Spleen (tissue), 13 donors: ENCODE measurements at regions of chr20 and their contacts with region 1.

Region 1: DNA sequence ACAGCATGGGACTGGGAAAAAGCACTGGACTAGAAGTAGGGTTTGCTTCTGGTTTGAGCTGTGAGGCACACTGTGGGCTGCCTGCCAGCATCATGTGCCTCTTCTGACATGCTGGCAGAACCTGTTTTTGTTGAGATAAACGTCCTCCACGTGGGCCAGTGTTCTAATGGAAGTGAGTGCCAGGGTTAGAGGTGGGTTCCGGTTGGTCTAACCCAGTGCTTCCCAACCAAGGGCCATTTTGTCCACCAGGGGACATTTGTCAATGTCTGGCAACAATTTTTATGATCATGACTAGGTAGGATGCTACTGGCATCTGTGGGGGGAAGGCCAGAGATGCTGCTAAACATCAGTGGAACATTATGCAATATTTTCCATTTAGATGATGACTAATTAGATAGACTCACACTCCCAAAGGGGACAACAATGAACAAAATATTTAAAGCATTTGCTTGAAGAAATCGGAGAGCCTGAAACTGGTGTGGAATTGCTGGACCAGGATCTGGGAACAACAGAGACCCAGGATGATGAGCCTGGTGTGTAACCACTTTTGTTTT is 7.8 kb upstream of the APMAP start:
- DNase-seq: peak; percentile 24
- H3K4me3 ChIP-seq: no peak overlapping the region
- H3K27ac ChIP-seq: no peak overlapping the region
- H3K4me1 ChIP-seq: peaks cover 0 to under 1% (median 0%) of the 10 kb centered on the region in 6 donors
- H3K27me3 ChIP-seq: no peaks in the 10 kb centered on the region
- CTCF ChIP-seq: no peak
- POLR2A ChIP-seq: no peak

Region 2: DNA sequence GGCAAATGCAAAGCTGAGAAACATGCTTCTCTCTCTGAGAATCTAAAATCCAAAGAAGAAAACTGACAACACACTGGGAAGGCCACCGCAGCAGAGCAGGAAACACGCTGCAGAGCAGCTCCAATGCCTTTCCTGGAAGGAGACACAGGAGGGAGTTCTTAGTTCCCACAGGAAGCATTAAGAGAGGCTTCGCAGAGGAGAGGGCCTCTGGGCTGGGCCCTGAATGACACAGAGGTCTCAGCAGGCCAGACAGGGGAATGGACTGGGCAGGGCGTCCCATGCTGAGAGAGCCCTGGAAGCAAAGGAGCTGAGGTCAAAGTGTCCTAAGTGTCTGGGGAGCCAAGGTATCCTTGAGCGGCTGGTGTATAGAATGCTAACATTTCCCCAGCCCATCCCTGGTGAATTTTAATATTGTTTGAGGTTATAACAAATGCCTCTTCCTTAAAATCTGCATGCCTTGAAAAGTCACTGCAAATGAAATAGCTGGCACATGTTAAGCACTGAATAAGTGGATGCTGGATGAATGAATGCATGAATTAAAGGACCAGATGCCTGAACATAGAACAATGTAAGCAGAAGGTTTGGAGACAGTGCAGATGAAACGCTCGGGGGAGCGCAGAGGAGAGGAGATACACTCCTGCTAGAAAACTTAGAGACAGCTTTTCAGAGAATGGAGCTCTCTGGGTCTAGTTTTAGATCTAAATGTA is 640.9 kb before region 1 on chr20:
- intact Hi-C with region 1: no loop called
- DNase-seq: no peak
- H3K4me3 ChIP-seq: no peak overlapping the region
- H3K27ac ChIP-seq: no peak overlapping the region
- H3K4me1 ChIP-seq: peaks cover 0 to 4% (median 0%) of the 10 kb centered on the region in 6 donors
- H3K27me3 ChIP-seq: no peaks in the 10 kb centered on the region
- CTCF ChIP-seq: no peak
- POLR2A ChIP-seq: no peak

Region 3: DNA sequence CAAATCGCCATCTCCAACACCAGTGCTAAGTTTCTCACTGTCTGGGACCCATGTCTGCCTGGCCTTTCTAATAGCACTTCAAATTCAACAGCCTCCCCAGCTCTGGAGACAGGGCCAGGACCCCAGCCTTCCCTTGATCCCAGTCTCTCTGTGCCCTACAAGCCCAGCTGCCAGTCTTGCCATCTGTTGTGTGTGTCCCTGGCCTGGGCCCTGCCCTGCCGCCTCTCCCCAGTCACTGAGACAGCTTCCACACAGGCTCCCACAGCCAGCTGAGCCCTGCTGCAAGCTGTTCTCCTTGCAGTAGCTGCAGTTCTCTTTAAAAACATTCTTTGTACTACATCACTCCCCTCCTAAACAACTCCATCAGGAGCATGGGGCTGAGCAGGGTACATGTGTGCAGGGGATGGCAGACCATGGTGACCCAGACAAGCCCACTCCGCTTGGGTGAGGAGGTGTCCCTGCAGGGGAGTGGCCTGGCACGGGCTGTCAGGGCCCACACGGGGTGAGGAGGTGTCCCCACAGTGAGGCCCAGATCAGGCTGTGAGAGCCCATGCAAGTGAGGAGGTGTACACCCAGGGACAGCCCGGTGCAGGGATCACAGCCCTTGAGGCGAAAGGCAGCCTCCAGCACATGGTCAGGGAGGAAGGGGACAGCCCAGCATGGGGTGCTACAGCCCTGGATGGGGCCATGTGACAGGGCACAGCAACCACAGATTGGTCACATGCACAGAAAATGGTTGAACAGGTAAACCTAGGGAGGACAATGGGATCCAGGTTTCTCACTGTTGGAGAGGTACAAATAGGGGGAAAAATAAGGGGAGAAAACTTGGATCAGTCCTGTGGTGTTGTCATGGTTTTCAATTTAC is 35.0 kb before region 1 on chr20:
- intact Hi-C with region 1: no loop called
- DNase-seq: peak; percentile 75
- H3K4me3 ChIP-seq: no peak overlapping the region
- H3K27ac ChIP-seq: peak overlapping the region in 3 of 8 donors; percentile 20 to 86 (median 32)
- H3K4me1 ChIP-seq: peaks cover 0 to 32% (median 7%) of the 10 kb centered on the region in 6 donors
- H3K27me3 ChIP-seq: no peaks in the 10 kb centered on the region
- CTCF ChIP-seq: no peak
- POLR2A ChIP-seq: no peak

Region 4: GRCh38 chr20:25178563-25179438 is 178.5 kb after region 1 on chr20:
- intact Hi-C with region 1: loop called (anchors 10 kb)
- DNase-seq: no peak
- H3K4me3 ChIP-seq: no peak overlapping the region
- H3K27ac ChIP-seq: no peak overlapping the region
- H3K4me1 ChIP-seq: no peaks in the 10 kb centered on the region
- H3K27me3 ChIP-seq: no peaks in the 10 kb centered on the region
- CTCF ChIP-seq: peak in 7 of 11 experiments; percentile 38 to 62 (median 52)
- POLR2A ChIP-seq: no peak

Region 5: GRCh38 chr20:25223179-25223661 is 222.9 kb after region 1 on chr20:
- intact Hi-C with region 1: no loop called
- DNase-seq: no peak
- H3K4me3 ChIP-seq: no peak overlapping the region
- H3K27ac ChIP-seq: peak overlapping the region in 1 of 8 donors; percentile 12
- H3K4me1 ChIP-seq: peaks cover 0 to 18% (median 0%) of the 10 kb centered on the region in 6 donors
- H3K27me3 ChIP-seq: no peaks in the 10 kb centered on the region
- CTCF ChIP-seq: no peak
- POLR2A ChIP-seq: no peak